HEK293T (cell line): ENCODE measurements at regions of chr6 and their contacts with region 1.

Region 1: GRCh38 chr6:137271245-137272183 is 52.3 kb upstream of the IFNGR1 start:
- DNase-seq: peak; percentile 49

Region 2: GRCh38 chr6:137240168-137240567 is 31.3 kb before region 1 on chr6:
- CTCF ChIA-PET with region 1: interaction called, 11 read pairs
- POLR2A ChIA-PET with region 1: no interaction called
- DNase-seq: no peak

Region 3: GRCh38 chr6:137313928-137314855 is 42.7 kb after region 1 on chr6:
- CTCF ChIA-PET with region 1: interaction called, 16 read pairs
- POLR2A ChIA-PET with region 1: no interaction called
- DNase-seq: peak; percentile 70